ENCODE measurements at regions of chr6 and their contacts with region 1.

Region 1: DNA sequence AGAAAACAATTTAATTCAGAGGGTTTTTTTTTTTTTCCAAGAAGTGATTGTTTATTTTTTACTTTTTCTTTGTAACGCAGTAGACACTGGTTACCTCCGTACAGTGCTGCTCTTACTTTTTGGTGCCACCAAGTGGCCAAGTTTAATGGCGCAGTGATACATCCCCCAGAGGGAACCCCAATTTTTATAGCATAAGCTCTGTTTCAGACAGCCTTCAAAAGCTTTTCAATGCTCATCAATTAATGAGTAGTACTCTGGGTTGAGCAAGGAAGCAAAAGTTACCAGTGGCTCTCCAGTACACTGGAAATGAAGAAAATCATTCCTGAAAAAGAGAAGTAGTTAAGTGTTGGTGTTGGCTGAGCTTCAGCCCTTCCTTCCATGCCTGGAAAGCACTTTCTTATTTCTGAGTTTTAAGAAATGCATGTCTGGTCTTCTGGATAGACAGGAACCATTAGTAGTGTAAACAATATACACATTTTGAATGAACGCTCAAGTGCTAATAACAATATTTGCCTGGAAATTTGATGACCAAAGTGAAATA is 129.1 kb upstream of the SMLR1 start:
- DNase-seq: peak; percentile 63
- H3K4me3 ChIP-seq: no peak overlapping the region
- H3K27ac ChIP-seq: no peak overlapping the region
- H3K4me1 ChIP-seq: peaks cover 8% of the 10 kb centered on the region
- H3K27me3 ChIP-seq: peaks cover 0 to 4% of the 10 kb centered on the region in 2 experiments
- CTCF ChIP-seq: peak; percentile 69 to 78
- POLR2A ChIP-seq: no peak

Region 2: DNA sequence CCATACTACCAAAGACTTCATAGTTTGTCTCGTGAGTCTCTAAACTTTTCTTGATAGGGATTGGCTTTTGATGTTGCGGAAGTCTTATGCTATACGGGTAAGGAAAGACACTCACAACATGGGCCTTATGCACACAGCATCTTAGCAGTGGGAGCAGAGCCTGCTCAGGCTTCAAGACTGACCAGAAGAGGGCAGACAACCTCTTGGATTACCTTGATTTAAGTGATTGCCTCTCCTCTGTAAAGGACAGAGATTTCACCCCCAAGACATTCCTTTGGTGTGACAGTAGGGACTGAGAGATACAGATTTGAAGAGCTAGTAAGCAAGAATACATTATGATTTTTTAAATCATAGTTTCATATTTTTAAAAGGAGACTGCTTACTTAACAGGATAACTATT is 404.3 kb before region 1 on chr6:
- CTCF ChIA-PET with region 1: interaction called, 53 read pairs
- POLR2A ChIA-PET with region 1: no interaction called
- dilution Hi-C with region 1: no loop called
- intact Hi-C with region 1: loop called (anchors 1 kb)
- DNase-seq: peak; percentile 51
- H3K4me3 ChIP-seq: no peak overlapping the region
- H3K27ac ChIP-seq: no peak overlapping the region
- H3K4me1 ChIP-seq: no peaks in the 10 kb centered on the region
- H3K27me3 ChIP-seq: peaks cover 0 to 3% of the 10 kb centered on the region in 2 experiments
- CTCF ChIP-seq: peak; percentile 38 to 63
- POLR2A ChIP-seq: no peak

Region 3: DNA sequence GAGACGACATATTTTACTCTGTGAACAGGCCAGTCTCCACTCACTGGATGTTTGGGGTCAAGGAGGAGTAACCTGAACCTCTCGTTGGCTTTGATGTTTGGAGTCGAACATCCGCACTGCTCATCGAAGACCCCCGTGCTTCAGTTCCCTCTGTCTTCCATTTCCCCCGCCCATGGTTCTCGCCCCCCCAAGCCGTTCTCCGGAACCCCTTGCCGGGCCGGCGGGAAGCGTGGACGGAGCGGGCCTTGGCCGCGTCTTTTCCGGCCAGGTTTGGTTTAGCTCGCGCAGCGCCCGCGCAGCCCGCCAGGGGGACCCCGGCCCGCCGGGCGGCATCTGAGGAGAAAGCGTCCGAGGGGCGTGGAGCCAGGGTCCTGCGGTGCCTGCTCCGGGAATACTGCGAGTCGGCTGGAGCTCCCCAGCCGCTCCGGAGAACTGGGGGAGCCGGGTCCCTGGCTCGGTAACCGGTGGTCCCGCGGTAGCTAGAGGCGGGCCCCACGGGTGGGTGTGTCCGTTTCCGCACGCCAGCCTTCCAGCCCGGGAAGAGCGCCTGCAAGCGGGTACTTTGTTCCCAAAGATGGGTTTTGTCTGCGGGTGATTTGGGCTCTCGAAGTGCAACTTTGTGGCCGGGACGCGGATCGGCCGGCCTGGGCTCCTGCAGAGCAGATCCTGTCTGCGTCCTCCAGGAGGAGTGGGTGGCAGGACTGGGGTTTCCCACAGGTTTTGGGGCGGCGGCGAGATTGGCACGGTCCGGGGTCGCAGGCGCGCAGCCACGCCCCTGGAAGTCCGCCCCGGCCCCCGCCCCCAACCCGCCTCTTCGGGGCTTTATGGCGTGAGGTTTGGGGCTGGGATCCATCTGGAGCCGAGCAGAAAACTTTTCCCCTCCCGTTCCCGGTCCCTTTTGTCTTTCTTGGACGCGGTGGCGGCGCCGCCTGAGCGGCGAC is 332.6 kb before region 1 on chr6 and contains the start of gene TMEM200A:
- CTCF ChIA-PET with region 1: interaction called, 161 read pairs
- POLR2A ChIA-PET with region 1: no interaction called
- dilution Hi-C with region 1: no loop called
- intact Hi-C with region 1: loop called (anchors 1 kb)
- DNase-seq: peak; percentile 38
- H3K4me3 ChIP-seq: peak within 1 kb of the TSS; percentile 43 to 72 (median 66)
- H3K27ac ChIP-seq: no peak within 1 kb of the TSS
- H3K4me1 ChIP-seq: peaks cover 6% of the 10 kb centered on the region
- H3K27me3 ChIP-seq: peaks cover 22 to 34% of the 10 kb centered on the region in 2 experiments
- CTCF ChIP-seq: peak; percentile 80 to 94
- POLR2A ChIP-seq: no peak
- total RNA-seq, gene TMEM200A: 0.74 and 0.75 TPM in 2 replicates

Region 4: GRCh38 chr6:130500693-130501092 is 197.4 kb before region 1 on chr6:
- CTCF ChIA-PET with region 1: interaction called, 13 read pairs
- POLR2A ChIA-PET with region 1: no interaction called
- dilution Hi-C with region 1: no loop called
- intact Hi-C with region 1: no loop called
- DNase-seq: peak; percentile 16
- H3K4me3 ChIP-seq: no peak overlapping the region
- H3K27ac ChIP-seq: no peak overlapping the region
- H3K4me1 ChIP-seq: no peaks in the 10 kb centered on the region
- H3K27me3 ChIP-seq: no peaks in the 10 kb centered on the region
- CTCF ChIP-seq: no peak
- POLR2A ChIP-seq: no peak

Region 5: GRCh38 chr6:130708338-130708737 is 10.3 kb after region 1 on chr6:
- CTCF ChIA-PET with region 1: interaction called, 20 read pairs
- POLR2A ChIA-PET with region 1: no interaction called
- dilution Hi-C with region 1: no loop called
- intact Hi-C with region 1: no loop called
- DNase-seq: peak; percentile 41
- H3K4me3 ChIP-seq: no peak overlapping the region
- H3K27ac ChIP-seq: no peak overlapping the region
- H3K4me1 ChIP-seq: peaks cover 8% of the 10 kb centered on the region
- H3K27me3 ChIP-seq: no peaks in the 10 kb centered on the region
- CTCF ChIP-seq: no peak
- POLR2A ChIP-seq: no peak

Region 6: GRCh38 chr6:130796313-130796905 is 98.3 kb after region 1 on chr6:
- CTCF ChIA-PET with region 1: no interaction called
- POLR2A ChIA-PET with region 1: no interaction called
- dilution Hi-C with region 1: no loop called
- intact Hi-C with region 1: no loop called
- DNase-seq: peak; percentile 95
- H3K4me3 ChIP-seq: no peak overlapping the region
- H3K27ac ChIP-seq: no peak overlapping the region
- H3K4me1 ChIP-seq: peaks cover 19% of the 10 kb centered on the region
- H3K27me3 ChIP-seq: no peaks in the 10 kb centered on the region
- CTCF ChIP-seq: no peak
- POLR2A ChIP-seq: peak; percentile 21

Region 7: DNA sequence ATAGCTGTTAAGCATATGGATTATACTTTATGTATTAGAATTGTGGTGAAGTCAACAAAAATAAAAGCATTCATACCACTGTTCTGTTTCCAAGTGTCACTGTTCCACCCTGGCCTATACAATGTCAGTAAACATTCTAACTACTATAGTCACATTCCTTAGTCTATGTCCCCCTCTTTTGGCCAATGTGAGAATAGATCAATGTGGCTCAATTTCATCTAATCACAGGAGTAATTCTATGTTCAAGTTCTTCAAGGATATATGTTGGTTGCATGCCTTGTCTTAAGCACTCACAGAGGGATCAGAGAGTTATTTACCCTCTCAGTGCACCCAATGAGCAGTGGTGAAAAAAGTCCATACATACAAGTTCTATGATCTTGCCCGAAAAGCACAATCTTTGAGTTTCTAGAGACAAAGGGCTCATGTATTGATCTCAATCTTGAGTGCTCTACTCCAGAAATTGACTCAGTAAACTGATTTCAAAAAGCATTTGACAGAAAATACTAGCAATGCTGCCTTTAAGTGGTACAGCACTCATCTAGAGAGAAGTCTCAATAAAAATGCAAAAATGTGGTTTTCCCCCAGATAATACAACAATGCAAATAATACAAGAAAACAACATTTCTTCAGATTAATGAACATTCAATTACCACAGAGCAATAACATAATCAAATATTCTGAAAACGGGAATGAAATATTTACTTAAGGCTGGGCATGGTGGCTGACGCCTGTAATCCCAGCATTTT is 145.7 kb after region 1 on chr6:
- CTCF ChIA-PET with region 1: no interaction called
- POLR2A ChIA-PET with region 1: no interaction called
- dilution Hi-C with region 1: no loop called
- intact Hi-C with region 1: loop called (anchors 1 kb)
- DNase-seq: peak; percentile 64
- H3K4me3 ChIP-seq: no peak overlapping the region
- H3K27ac ChIP-seq: no peak overlapping the region
- H3K4me1 ChIP-seq: no peaks in the 10 kb centered on the region
- H3K27me3 ChIP-seq: no peaks in the 10 kb centered on the region
- CTCF ChIP-seq: peak; percentile 34 to 35
- POLR2A ChIP-seq: no peak

Region 8: GRCh38 chr6:131135244-131136020 is 437.4 kb after region 1 on chr6 and contains the start of gene AKAP7:
- CTCF ChIA-PET with region 1: no interaction called
- POLR2A ChIA-PET with region 1: no interaction called
- dilution Hi-C with region 1: no loop called
- intact Hi-C with region 1: no loop called
- DNase-seq: peak; percentile 67
- H3K4me3 ChIP-seq: peak within 1 kb of the TSS; percentile 60 to 94 (median 93)
- H3K27ac ChIP-seq: peak within 1 kb of the TSS; percentile 56
- H3K4me1 ChIP-seq: peaks cover 8% of the 10 kb centered on the region
- H3K27me3 ChIP-seq: no peaks in the 10 kb centered on the region
- CTCF ChIP-seq: no peak
- POLR2A ChIP-seq: peak; percentile 64
- total RNA-seq, gene AKAP7: 3.3 and 4.8 TPM in 2 replicates

Measured in endothelial cell of umbilical vein (primary cell).